ENCODE measurements at regions of chr3 and their contacts with region 1.

Region 1: GRCh38 chr3:69065318-69065964 is 13.3 kb upstream of the TMF1 start:
- DNase-seq: peak; percentile 55
- ATAC-seq: peak; percentile 82
- H3K4me3 Mint-ChIP-seq: peak overlapping the region; percentile 55
- H3K27ac Mint-ChIP-seq: peak overlapping the region; percentile 81
- H3K4me1 Mint-ChIP-seq: peaks cover 50% of the 10 kb centered on the region
- H3K27me3 Mint-ChIP-seq: no peaks in the 10 kb centered on the region

Region 2: DNA sequence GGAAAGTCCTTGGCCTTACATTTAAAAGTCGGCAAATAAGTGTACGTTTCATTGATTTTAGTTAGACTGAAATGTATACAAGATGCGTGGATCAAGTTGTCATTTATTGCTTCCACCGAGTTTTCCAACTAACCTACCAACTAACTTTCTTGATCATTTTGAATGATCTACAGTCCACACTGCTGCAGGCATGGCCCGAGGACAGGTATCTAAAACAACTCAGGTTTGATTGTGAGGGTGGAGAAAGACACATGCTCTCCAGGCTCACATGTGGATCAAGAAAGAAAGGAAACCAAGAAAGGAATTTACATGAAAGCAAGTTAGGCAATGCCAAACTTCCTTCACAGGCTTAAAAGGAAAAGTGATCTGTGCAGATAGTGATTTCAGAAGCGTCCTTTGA is 569.9 kb before region 1 on chr3:
- CTCF ChIA-PET with region 1: no interaction called
- POLR2A ChIA-PET with region 1: no interaction called
- DNase-seq: no peak
- ATAC-seq: no peak
- H3K4me3 Mint-ChIP-seq: no peak overlapping the region
- H3K27ac Mint-ChIP-seq: no peak overlapping the region
- H3K4me1 Mint-ChIP-seq: no peaks in the 10 kb centered on the region
- H3K27me3 Mint-ChIP-seq: no peaks in the 10 kb centered on the region

Region 3: DNA sequence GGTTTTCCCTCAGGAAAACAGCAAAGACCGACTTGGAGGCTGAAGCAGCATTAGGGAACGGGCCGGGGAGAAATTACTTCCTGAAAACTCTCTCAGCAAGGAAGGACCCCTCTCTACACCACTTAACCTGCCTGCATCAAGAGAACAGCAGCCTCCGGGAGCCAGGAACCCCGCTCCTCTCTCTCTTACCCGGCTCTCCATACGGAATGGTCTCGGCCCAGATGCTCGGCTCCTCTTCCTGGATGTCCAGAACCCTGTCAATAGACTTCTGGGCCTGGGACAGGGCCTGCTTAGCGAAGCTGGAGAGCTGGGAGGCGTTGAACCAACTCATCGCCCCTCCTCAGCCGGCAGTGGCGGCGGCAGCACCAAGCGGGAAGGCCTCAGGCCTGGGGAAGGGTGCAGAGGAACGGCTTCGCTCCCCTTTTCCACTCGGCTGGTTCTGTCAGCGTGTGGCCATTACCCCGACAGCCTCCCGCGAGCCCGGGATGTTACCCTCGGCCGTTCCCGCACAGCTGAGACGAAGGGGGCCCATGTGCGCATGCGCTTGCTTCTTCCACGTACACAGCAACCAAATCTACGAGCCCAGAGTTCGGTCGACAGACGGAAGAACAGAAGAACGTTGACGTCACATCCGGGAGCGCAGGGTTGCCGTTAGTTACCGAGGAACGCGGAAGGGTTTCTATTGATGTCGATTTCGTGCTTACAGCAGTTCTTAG is 13.5 kb before region 1 on chr3 and contains the start of gene TMF1:
- CTCF ChIA-PET with region 1: interaction called, 23 read pairs
- POLR2A ChIA-PET with region 1: interaction called, 35 read pairs
- DNase-seq: peak; percentile 99
- ATAC-seq: peak; percentile 92
- H3K4me3 Mint-ChIP-seq: peak within 1 kb of the TSS; percentile 90
- H3K27ac Mint-ChIP-seq: peak within 1 kb of the TSS; percentile 91
- H3K4me1 Mint-ChIP-seq: peaks cover 51% of the 10 kb centered on the region
- H3K27me3 Mint-ChIP-seq: no peaks in the 10 kb centered on the region
- total RNA-seq, gene TMF1: 47.5 to 49.3 TPM

Region 4: DNA sequence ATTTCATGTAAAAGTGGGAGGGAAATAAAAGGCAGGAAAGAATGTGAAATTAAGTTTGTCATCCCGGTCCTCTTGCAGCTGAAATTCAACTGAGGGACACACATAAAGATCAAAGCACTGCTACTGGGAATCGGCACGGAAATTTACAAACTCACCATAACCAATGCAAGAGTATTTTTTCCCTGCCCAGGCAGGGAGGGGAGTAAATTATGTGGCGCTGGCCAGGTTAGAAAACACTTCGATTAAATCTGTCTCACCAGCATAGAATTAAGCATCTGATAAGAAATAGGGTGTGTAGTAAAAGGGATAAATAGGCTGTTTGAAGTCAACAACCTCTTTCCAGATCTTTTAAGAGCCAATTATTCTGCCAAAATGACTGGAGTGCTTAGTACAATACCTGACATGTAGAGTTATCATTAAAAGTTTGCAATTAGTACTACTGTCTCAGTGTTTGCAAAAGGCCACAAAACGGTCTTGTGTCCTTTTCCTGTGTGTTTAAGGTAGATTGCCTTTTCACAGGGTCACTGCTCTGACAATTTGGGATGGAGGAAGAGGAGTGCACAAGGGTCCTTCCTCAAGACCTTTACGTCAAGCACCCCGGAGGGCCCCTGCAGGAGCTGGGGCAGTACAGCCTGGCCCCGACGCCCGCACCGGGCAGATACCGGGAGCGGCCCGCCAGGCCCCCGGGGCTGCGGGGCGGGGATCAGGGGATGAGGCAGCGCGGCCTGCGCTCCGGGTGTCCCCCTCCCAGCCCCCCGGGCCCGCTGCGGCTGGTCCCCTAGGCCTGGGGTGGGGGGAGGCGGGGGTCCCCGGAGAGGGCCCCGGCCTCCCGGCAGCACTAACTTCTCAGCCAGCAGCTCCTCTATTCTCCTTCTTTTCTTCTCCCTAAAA is 14.1 kb after region 1 on chr3:
- CTCF ChIA-PET with region 1: interaction called, 11 read pairs
- POLR2A ChIA-PET with region 1: interaction called, 54 read pairs
- DNase-seq: no peak
- ATAC-seq: peak; percentile 25
- H3K4me3 Mint-ChIP-seq: peak overlapping the region; percentile 81
- H3K27ac Mint-ChIP-seq: peak overlapping the region; percentile 77
- H3K4me1 Mint-ChIP-seq: peaks cover 69% of the 10 kb centered on the region
- H3K27me3 Mint-ChIP-seq: no peaks in the 10 kb centered on the region

Region 5: GRCh38 chr3:69084326-69085167 is 19.1 kb after region 1 on chr3 and contains the start of gene ARL6IP5:
- CTCF ChIA-PET with region 1: interaction called, 11 read pairs
- POLR2A ChIA-PET with region 1: interaction called, 54 read pairs
- DNase-seq: peak; percentile 96
- ATAC-seq: peak; percentile 65
- H3K4me3 Mint-ChIP-seq: peak within 1 kb of the TSS; percentile 95
- H3K27ac Mint-ChIP-seq: peak within 1 kb of the TSS; percentile 89
- H3K4me1 Mint-ChIP-seq: peaks cover 57% of the 10 kb centered on the region
- H3K27me3 Mint-ChIP-seq: no peaks in the 10 kb centered on the region
- total RNA-seq, gene ARL6IP5: 148 to 153 TPM

Region 6: DNA sequence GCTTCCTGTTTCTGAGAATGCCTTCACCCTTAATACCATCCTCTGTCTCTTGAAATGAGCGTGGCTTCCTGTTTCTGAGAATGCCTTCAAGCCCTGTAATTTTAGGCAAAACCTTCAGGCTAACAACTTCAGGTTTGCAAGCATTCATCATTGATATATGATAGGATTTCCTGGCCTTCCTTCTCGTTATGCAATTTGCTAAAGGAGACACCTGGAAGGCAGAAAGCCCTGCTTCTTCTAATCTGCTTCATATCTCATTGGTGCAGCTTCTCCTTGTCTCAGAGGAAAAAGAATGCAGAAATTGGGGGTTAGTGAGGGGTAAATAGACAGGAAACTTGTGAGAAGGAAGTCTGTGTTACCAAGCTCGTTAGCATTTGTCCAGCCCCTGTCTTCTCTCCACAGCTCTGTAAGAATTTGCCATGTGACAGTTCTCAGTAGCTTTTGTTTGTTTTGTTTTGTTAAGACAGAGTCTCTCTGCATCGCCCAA is 26.6 kb after region 1 on chr3:
- CTCF ChIA-PET with region 1: interaction called, 7 read pairs
- POLR2A ChIA-PET with region 1: interaction called, 54 read pairs
- DNase-seq: peak; percentile 55
- ATAC-seq: peak; percentile 70
- H3K4me3 Mint-ChIP-seq: peak overlapping the region; percentile 81
- H3K27ac Mint-ChIP-seq: peak overlapping the region; percentile 88
- H3K4me1 Mint-ChIP-seq: peaks cover 84% of the 10 kb centered on the region
- H3K27me3 Mint-ChIP-seq: no peaks in the 10 kb centered on the region